ENCODE measurements at regions of chr11 and their contacts with region 1.

Region 1: GRCh38 chr11:9039194-9039593 is 35.4 kb upstream of the NRIP3 start:
- DNase-seq: peak in 1 of 4 experiments; percentile 10
- ATAC-seq: no peak
- H3K4me3 ChIP-seq: no peak overlapping the region
- H3K27ac ChIP-seq: no peak overlapping the region
- H3K4me1 ChIP-seq: peaks cover 0 to 4% of the 10 kb centered on the region in 2 experiments; a peak in 2 of 5 replicates
- H3K27me3 ChIP-seq: peaks cover 35 to 36% of the 10 kb centered on the region in 2 experiments; a peak in 4 of 5 replicates
- CTCF ChIP-seq: no peak
- EP300 ChIP-seq: no peak
- POLR2A ChIP-seq: no peak
- RAD21 ChIP-seq: no peak

Region 2: GRCh38 chr11:9060700-9061111 is 21.5 kb after region 1 on chr11:
- CTCF ChIA-PET with region 1: no interaction called
- POLR2A ChIA-PET with region 1: no interaction called
- in situ Hi-C with region 1: no loop called
- intact Hi-C with region 1: loop called (anchors 1 kb)
- DNase-seq: peak; percentile 38 to 59 (median 50)
- ATAC-seq: peak; percentile 85
- H3K4me3 ChIP-seq: no peak overlapping the region
- H3K27ac ChIP-seq: no peak overlapping the region
- H3K4me1 ChIP-seq: no peaks in the 10 kb centered on the region; a peak in 2 of 5 replicates
- H3K27me3 ChIP-seq: peaks cover 8 to 24% of the 10 kb centered on the region in 2 experiments
- CTCF ChIP-seq: peak; percentile 46 to 60 (median 56)
- EP300 ChIP-seq: no peak
- POLR2A ChIP-seq: no peak
- RAD21 ChIP-seq: peak in 1 of 2 experiments; percentile 44; a peak in 2 of 4 replicates

Region 3: DNA sequence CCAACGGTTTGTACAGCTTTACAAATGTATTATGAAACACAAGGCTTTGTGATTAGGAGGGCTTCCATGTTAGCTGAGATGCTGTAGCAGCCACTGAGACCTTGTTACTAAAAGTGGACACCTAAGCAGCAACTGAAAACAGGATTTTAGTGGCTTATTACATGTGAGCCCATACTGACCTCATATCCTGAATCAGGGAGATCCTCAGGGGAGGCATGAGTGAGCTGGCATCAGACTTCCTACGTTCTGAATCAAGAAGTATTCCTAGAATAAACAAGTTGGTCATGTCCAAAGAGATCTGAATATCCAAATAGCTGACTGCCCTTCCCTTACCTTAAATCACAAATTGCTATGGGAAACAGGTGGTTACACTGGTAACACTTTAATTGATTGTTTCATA is 111.3 kb after region 1 on chr11:
- CTCF ChIA-PET with region 1: no interaction called
- POLR2A ChIA-PET with region 1: no interaction called
- in situ Hi-C with region 1: no loop called
- intact Hi-C with region 1: no loop called
- DNase-seq: no peak
- ATAC-seq: no peak
- H3K4me3 ChIP-seq: no peak overlapping the region
- H3K27ac ChIP-seq: no peak overlapping the region; the same call in 2 of the 3 replicates
- H3K4me1 ChIP-seq: no peaks in the 10 kb centered on the region
- H3K27me3 ChIP-seq: no peaks in the 10 kb centered on the region
- CTCF ChIP-seq: no peak
- EP300 ChIP-seq: no peak
- POLR2A ChIP-seq: no peak
- RAD21 ChIP-seq: no peak

Measured in K562 (cell line).